ENCODE measurements at regions of chr15 and their contacts with region 1.

Region 1: GRCh38 chr15:44663409-44664308 is at the start of gene SPG11:
- DNase-seq: peak; percentile 93 to 99 (median 96)

Region 2: GRCh38 chr15:44606740-44607139 is 56.9 kb before region 1 on chr15:
- intact Hi-C with region 1: no loop called
- DNase-seq: no peak

Region 3: DNA sequence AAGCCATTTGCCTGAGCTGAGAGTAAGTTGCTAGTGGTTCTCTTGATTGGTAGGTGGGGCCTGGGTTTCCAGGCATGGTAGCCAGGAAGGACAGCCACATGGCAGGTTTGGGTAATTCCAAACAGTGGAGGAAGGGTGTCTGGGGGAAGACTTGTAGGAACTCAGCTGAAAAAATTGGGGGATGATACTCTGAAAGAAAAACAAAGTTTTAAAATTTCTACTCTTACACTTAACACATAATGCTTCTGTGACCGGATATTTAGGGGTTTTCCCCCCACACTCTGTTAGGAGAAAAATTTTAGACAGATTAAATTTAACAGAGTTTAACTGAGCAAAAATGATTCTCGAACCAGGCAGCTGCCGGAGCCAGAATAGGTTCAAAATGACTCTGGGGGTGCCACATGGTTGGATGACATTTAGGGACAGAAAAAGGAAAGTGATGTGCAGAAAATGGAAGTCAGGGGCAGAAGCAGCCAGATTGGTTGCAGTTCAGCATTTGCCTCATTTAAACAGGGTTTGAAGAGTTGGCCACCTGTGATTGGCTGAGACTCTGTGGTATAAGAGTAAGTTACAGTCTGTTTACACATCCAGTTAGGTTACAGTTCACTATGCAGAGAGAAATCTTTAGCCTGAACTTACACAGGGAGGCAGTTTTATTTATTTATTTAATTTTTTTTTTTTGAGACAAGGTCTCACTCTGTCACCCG is 55.8 kb after region 1 on chr15:
- intact Hi-C with region 1: no loop called
- DNase-seq: no peak

Region 4: GRCh38 chr15:44735482-44736180 is 72.0 kb after region 1 on chr15:
- intact Hi-C with region 1: loop called (anchors 2 kb)
- DNase-seq: no peak

Region 5: GRCh38 chr15:45037936-45038335 is 374.3 kb after region 1 on chr15:
- intact Hi-C with region 1: no loop called
- DNase-seq: no peak